ENCODE measurements at regions of chr3 and their contacts with region 1.

Region 1: DNA sequence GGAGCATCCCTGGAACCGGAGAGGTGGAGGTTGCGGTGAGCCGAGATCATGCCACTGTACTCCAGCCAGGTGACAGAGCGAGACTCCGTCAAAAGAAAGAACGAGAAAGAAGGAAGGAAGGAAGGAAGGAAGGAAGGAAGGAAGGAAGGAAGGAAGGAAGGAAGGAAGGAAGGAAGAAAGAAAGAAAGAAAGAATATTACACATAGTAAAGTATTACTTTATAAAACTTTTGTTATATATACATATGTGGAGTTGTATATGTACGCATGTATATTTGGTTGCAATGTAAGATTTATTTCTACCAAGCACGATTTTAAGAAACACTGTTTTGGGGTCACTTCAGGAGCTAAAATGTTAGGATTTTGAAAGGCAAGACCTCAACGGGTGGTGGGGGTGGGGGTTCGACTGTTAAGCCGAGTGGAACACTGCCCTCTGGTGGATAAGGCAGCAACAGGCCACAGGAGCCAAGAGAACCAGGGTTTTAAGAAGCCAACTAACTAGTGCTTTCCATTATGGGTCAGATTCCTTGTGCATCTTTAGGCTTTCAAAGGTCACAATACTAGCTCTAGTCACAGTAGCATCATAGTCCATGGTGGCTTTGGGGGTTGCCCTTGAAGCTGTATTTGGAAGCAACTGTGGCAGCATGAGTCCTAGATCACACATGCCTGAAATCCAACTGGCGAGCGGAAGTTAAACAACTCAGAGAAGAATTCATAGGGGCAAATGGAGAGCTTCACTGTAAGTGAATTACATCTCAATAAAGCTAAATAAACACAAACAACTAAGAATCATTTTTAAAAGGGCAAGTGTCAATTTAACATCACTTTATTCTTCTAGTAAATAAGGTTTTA is 22.5 kb downstream of the GLB1 start:
- DNase-seq: peak; percentile 33
- ATAC-seq: peak; percentile 84
- H3K4me3 Mint-ChIP-seq: no peak overlapping the region
- H3K27ac Mint-ChIP-seq: no peak overlapping the region
- H3K4me1 Mint-ChIP-seq: peaks cover 17% of the 10 kb centered on the region
- H3K27me3 Mint-ChIP-seq: no peaks in the 10 kb centered on the region
- CTCF ChIP-seq: no peak

Region 2: GRCh38 chr3:32733631-32734229 is 340.7 kb before region 1 on chr3:
- CTCF ChIA-PET with region 1: interaction called, 3 read pairs
- POLR2A ChIA-PET with region 1: no interaction called
- intact Hi-C with region 1: loop called (anchors 10 kb)
- DNase-seq: no peak
- ATAC-seq: no peak
- H3K4me3 Mint-ChIP-seq: no peak overlapping the region
- H3K27ac Mint-ChIP-seq: no peak overlapping the region
- H3K4me1 Mint-ChIP-seq: no peaks in the 10 kb centered on the region
- H3K27me3 Mint-ChIP-seq: no peaks in the 10 kb centered on the region
- CTCF ChIP-seq: no peak

Region 3: DNA sequence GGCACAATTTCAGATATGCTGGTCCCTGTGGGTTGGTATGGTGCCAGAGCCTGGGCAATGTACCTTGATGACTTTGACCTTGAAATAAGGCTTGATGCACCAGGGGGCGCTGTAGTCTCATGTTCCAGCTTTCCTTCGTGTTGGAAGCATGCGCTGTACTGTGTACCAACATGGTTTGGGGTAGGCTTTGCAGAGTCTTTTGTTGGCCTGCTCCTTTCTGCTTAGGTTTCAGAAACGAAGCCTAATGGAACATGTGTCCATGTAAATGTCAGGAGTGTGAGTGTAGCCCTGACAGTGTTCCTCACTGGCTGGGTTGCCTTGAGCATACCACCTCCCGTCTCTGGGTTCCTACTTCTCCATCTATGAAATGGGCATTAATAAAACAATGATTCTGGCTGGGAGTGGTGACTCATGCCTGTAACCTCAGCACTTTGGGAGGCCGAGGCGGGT is 126.6 kb before region 1 on chr3:
- CTCF ChIA-PET with region 1: interaction called, 74 read pairs
- POLR2A ChIA-PET with region 1: interaction called, 6 read pairs
- intact Hi-C with region 1: loop called (anchors 1 kb)
- DNase-seq: peak; percentile 67
- ATAC-seq: peak; percentile 86
- H3K4me3 Mint-ChIP-seq: no peak overlapping the region
- H3K27ac Mint-ChIP-seq: no peak overlapping the region
- H3K4me1 Mint-ChIP-seq: peaks cover 9% of the 10 kb centered on the region
- H3K27me3 Mint-ChIP-seq: no peaks in the 10 kb centered on the region
- CTCF ChIP-seq: no peak

Region 4: GRCh38 chr3:33063651-33064051 is 10.8 kb before region 1 on chr3:
- CTCF ChIA-PET with region 1: interaction called, 28 read pairs
- POLR2A ChIA-PET with region 1: interaction called, 4 read pairs
- intact Hi-C with region 1: no loop called
- DNase-seq: no peak
- ATAC-seq: peak; percentile 78
- H3K4me3 Mint-ChIP-seq: peak overlapping the region; percentile 8
- H3K27ac Mint-ChIP-seq: peak overlapping the region; percentile 84
- H3K4me1 Mint-ChIP-seq: peaks cover 52% of the 10 kb centered on the region
- H3K27me3 Mint-ChIP-seq: no peaks in the 10 kb centered on the region
- CTCF ChIP-seq: no peak

Region 5: GRCh38 chr3:33089515-33089914 is 15.1 kb after region 1 on chr3:
- CTCF ChIA-PET with region 1: interaction called, 12 read pairs
- POLR2A ChIA-PET with region 1: no interaction called
- intact Hi-C with region 1: no loop called
- DNase-seq: no peak
- ATAC-seq: peak; percentile 85
- H3K4me3 Mint-ChIP-seq: peak overlapping the region; percentile 29
- H3K27ac Mint-ChIP-seq: peak overlapping the region; percentile 64
- H3K4me1 Mint-ChIP-seq: peaks cover 74% of the 10 kb centered on the region
- H3K27me3 Mint-ChIP-seq: no peaks in the 10 kb centered on the region
- CTCF ChIP-seq: no peak

Region 6: DNA sequence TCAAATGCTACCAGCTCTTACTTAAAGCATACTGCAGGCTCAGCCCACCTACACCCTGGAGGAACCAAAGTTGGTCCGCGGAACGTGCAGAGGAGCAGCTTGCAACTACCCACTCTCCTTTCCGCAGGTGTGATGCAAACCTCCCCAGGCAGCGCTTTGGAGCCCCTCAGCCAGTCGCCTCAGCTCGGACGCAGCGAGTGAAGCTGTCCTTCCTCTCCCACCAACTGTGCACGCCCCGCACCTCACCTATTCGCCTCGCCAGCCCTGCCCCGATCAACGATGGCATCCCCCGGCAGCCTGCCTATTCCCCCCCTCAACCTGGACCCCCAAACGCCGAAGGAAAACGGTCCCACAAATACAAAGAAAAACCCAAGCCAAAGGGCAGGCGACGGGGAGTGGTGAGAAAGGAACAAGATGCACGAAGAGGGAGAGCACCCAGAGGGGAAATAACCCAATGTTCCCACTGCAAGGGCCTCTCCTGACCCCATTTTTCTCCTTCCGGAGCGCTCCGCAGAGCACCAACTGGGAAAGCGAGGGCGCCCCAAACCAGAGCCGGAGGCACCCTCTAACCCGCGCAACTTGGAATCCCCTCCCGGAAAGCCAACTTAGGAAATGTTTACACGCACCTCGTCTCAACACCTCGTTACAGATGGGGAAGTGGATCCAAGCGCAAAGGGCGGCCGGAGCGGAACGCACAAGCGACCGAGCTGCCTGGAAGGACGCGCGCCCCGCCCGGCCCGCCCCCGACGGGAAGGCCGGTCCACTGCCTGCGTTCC is 21.8 kb after region 1 on chr3:
- CTCF ChIA-PET with region 1: interaction called, 5 read pairs
- POLR2A ChIA-PET with region 1: no interaction called
- intact Hi-C with region 1: loop called (anchors 2 kb)
- DNase-seq: peak; percentile 58
- ATAC-seq: peak; percentile 68
- H3K4me3 Mint-ChIP-seq: peak overlapping the region; percentile 98
- H3K27ac Mint-ChIP-seq: peak overlapping the region; percentile 94
- H3K4me1 Mint-ChIP-seq: peaks cover 41% of the 10 kb centered on the region
- H3K27me3 Mint-ChIP-seq: no peaks in the 10 kb centered on the region
- CTCF ChIP-seq: no peak